Activated naive CD4-positive, alpha-beta T cell treated with anti-CD3 and anti-CD28 coated beads for 36 hours (primary cell): ENCODE measurements at regions of chrX and their contacts with region 1.

Region 1: GRCh38 chrX:27336466-27337091 is 126.6 kb downstream of the PPP4R3C start:
- DNase-seq: peak; percentile 41
- H3K4me3 Mint-ChIP-seq: no peak overlapping the region
- H3K27ac Mint-ChIP-seq: no peak overlapping the region
- H3K4me1 Mint-ChIP-seq: no peaks in the 10 kb centered on the region
- H3K27me3 Mint-ChIP-seq: no peaks in the 10 kb centered on the region

Region 2: GRCh38 chrX:26649534-26649933 is 687.0 kb before region 1 on chrX:
- CTCF ChIA-PET with region 1: no interaction called
- intact Hi-C with region 1: loop called (anchors 5 kb)
- DNase-seq: no peak
- H3K4me3 Mint-ChIP-seq: no peak overlapping the region
- H3K27ac Mint-ChIP-seq: no peak overlapping the region
- H3K4me1 Mint-ChIP-seq: no peaks in the 10 kb centered on the region
- H3K27me3 Mint-ChIP-seq: no peaks in the 10 kb centered on the region

Region 3: GRCh38 chrX:26783512-26784225 is 552.9 kb before region 1 on chrX:
- CTCF ChIA-PET with region 1: no interaction called
- intact Hi-C with region 1: loop called (anchors 5 kb)
- DNase-seq: peak; percentile 4
- H3K4me3 Mint-ChIP-seq: no peak overlapping the region
- H3K27ac Mint-ChIP-seq: no peak overlapping the region
- H3K4me1 Mint-ChIP-seq: no peaks in the 10 kb centered on the region
- H3K27me3 Mint-ChIP-seq: no peaks in the 10 kb centered on the region